PC-9 (cell line): ENCODE measurements at regions of chr9 and their contacts with region 1.

Region 1: DNA sequence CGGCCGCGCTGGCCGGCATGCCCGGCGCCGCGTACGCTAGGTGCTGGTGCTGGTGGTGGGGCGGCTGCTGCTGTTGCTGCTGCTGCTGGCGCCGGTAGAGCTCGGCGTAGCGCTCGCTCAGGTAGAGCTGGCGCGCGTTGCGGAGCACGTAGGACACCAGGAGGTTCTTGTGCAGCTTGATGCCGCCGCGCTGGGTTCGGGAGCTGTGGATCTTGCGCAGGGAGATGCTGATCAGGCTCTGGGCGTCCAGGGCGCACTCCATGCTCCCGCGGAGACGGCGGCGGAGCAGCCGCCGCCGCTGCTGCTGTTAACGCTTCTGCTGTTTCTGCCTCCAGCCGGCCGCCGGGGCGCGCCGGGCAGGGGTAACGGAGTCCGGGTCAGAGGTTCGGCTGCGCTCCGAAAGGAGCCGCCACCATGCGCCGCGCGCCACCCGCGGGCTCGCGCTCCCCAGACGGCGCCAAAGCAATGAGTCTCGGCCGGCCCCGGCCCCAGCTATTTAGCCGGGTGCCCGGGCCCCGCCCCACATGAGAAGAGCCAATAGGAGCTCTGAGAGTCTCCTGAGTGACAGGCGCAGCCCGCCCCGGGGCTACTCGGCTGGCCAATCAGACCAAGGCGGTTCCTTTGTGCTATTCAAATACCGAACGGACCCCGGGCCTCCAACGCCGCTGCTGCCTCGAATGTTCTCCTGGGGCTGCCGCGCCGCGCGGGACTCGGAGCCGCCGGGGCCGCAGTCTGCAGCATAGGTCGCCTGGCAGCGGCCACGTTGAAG is at the start of gene IER5L:
- DNase-seq: peak; percentile 87 to 98
- H3K4me3 ChIP-seq: peak within 1 kb of the TSS; percentile 95
- H3K27ac ChIP-seq: peak within 1 kb of the TSS; percentile 45; the same call in 1 of the 2 replicates
- H3K4me1 ChIP-seq: peaks cover 18% of the 10 kb centered on the region
- H3K27me3 ChIP-seq: no peaks in the 10 kb centered on the region
- CTCF ChIP-seq: no peak
- total RNA-seq, gene IER5L: 35.5 and 37.3 TPM in 2 replicates

Region 2: DNA sequence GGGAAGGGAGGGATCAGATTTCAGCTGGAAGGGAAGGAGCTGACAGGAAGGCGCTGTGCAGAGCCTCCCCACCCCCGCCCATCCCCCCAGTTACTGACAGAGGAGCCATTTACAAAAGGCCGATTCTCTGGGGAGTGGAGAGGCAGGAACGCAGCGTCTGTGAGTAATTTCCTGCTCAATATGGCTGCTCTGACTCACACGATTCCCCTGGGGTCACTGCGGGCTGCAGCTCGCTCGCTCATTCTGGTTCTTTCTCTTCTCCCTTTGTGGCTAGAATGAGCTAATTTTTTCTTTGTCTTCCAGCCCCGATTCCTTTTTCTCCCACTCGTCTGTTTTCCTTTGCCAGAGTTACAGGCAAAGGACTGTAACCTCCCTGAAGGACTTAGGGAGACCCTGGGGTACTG is 38.0 kb before region 1 on chr9:
- CTCF ChIA-PET with region 1: interaction called, 36 read pairs
- POLR2A ChIA-PET with region 1: interaction called, 22 read pairs
- intact Hi-C with region 1: loop called (anchors 1 kb)
- DNase-seq: peak; percentile 85 to 95
- H3K4me3 ChIP-seq: peak overlapping the region; percentile 91
- H3K27ac ChIP-seq: peak overlapping the region; percentile 100
- H3K4me1 ChIP-seq: peaks cover 43% of the 10 kb centered on the region
- H3K27me3 ChIP-seq: no peaks in the 10 kb centered on the region
- CTCF ChIP-seq: no peak

Region 3: GRCh38 chr9:129258124-129258822 is 80.3 kb after region 1 on chr9:
- CTCF ChIA-PET with region 1: no interaction called
- POLR2A ChIA-PET with region 1: interaction called, 11 read pairs
- intact Hi-C with region 1: no loop called
- DNase-seq: peak; percentile 78 to 90
- H3K4me3 ChIP-seq: peak overlapping the region; percentile 50
- H3K27ac ChIP-seq: no peak overlapping the region
- H3K4me1 ChIP-seq: peaks cover 16% of the 10 kb centered on the region
- H3K27me3 ChIP-seq: 0 out of 2 replicates have a peak, but pooled peaks cover 5% of the 10 kb centered on the region
- CTCF ChIP-seq: no peak

Region 4: GRCh38 chr9:129383561-129384416 is 205.8 kb after region 1 on chr9:
- CTCF ChIA-PET with region 1: interaction called, 7 read pairs
- POLR2A ChIA-PET with region 1: interaction called, 3 read pairs
- intact Hi-C with region 1: loop called (anchors 1 kb)
- DNase-seq: peak; percentile 50 to 68
- H3K4me3 ChIP-seq: peak overlapping the region; percentile 85
- H3K27ac ChIP-seq: peak overlapping the region; percentile 96
- H3K4me1 ChIP-seq: peaks cover 22% of the 10 kb centered on the region
- H3K27me3 ChIP-seq: no peaks in the 10 kb centered on the region
- CTCF ChIP-seq: no peak

Region 5: GRCh38 chr9:129460323-129461261 is 282.6 kb after region 1 on chr9:
- CTCF ChIA-PET with region 1: interaction called, 7 read pairs
- POLR2A ChIA-PET with region 1: interaction called, 10 read pairs
- intact Hi-C with region 1: no loop called
- DNase-seq: peak; percentile 85 to 94
- H3K4me3 ChIP-seq: peak overlapping the region; percentile 64
- H3K27ac ChIP-seq: peak overlapping the region; percentile 89
- H3K4me1 ChIP-seq: peaks cover 47% of the 10 kb centered on the region
- H3K27me3 ChIP-seq: no peaks in the 10 kb centered on the region
- CTCF ChIP-seq: no peak

Region 6: DNA sequence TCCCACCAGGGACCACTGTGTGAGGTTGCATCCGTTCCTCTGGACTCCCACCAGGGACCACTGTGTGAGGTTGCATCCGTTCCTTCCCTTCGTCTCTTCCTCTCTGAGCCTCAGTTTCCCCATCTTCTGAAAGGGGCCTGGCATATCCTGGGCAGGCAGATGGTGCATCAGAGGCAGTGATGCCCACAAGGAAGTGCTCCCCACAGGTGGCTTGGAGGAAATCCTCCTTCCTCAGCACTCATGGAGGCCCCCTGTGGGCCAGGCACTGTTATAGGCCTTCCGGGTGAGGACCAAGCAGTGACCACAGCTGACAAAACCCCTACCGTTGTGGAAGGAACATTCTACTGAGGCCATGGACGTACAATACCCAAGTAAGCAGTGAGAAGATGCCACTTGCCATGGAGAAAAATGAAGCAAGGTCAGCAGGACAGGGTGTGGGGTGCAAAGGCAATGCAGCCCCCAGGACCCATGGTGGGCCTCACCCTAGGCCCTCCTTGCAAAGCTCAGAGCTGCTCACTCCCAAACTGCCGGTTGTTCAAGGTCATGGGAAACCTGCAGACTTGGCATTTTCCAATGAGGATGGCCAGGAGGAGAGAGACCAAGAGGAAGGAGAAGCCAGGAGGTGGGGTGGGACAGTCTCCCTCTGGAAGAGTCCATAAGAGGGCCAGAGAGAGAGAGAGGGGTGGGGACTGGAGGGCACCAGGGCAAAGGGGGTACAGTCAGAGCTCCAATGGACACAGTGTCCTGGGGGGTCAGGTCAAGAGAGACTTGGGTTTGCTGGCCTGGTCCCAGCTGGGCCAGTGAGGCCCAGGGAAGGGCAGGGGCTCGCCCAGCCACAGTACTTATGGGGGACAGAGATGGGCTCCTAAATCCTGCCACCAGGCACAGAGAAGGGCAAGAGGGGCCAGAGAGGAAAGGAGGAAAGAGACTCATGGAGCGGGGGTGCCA is 391.8 kb after region 1 on chr9:
- CTCF ChIA-PET with region 1: interaction called, 3 read pairs
- POLR2A ChIA-PET with region 1: interaction called, 4 read pairs
- intact Hi-C with region 1: loop called (anchors 1 kb)
- DNase-seq: peak; percentile 52 to 56
- H3K4me3 ChIP-seq: peak overlapping the region; percentile 1; the same call in 1 of the 2 replicates
- H3K27ac ChIP-seq: peak overlapping the region; percentile 90
- H3K4me1 ChIP-seq: peaks cover 36% of the 10 kb centered on the region
- H3K27me3 ChIP-seq: no peaks in the 10 kb centered on the region
- CTCF ChIP-seq: peak; percentile 67

Region 7: DNA sequence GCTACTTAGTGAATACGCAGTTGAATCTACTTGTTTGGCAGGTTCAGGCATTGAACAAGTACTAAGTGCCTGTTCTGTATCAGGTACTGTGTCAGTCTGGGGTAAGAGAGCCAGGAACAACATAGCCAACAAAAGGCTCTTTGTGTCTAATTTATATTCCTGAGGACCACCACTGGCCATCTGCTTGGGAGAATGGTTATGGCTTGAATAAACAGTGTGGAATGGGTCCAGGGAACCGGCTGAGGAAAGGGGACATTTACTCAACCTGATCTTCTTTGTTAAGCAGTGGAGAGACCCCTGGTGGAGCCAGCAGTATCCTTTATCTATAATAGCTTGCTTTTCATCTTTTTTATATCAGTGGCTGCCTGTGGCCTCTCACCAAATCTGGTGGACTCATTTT is 1554.2 kb after region 1 on chr9:
- CTCF ChIA-PET with region 1: no interaction called
- POLR2A ChIA-PET with region 1: interaction called, 17 read pairs
- intact Hi-C with region 1: no loop called
- DNase-seq: no peak
- H3K4me3 ChIP-seq: no peak overlapping the region
- H3K27ac ChIP-seq: no peak overlapping the region
- H3K4me1 ChIP-seq: peaks cover 23% of the 10 kb centered on the region
- H3K27me3 ChIP-seq: no peaks in the 10 kb centered on the region
- CTCF ChIP-seq: no peak